Activated CD4-positive, alpha-beta memory T cell treated with anti-CD3 and anti-CD28 coated beads for 36 hours (primary cell): ENCODE measurements at regions of chr18 and their contacts with region 1.

Region 1: GRCh38 chr18:79528846-79529245 is 133.1 kb downstream of the NFATC1 start:
- DNase-seq: peak; percentile 81
- H3K4me3 Mint-ChIP-seq: no peak overlapping the region
- H3K27ac Mint-ChIP-seq: no peak overlapping the region
- H3K4me1 Mint-ChIP-seq: peaks cover 15% of the 10 kb centered on the region
- H3K27me3 Mint-ChIP-seq: no peaks in the 10 kb centered on the region

Region 2: GRCh38 chr18:79378542-79379250 is 150.2 kb before region 1 on chr18:
- CTCF ChIA-PET with region 1: interaction called, 176 read pairs
- POLR2A ChIA-PET with region 1: interaction called, 3 read pairs
- intact Hi-C with region 1: loop called (anchors 1 kb)
- DNase-seq: peak; percentile 90
- H3K4me3 Mint-ChIP-seq: no peak overlapping the region
- H3K27ac Mint-ChIP-seq: no peak overlapping the region
- H3K4me1 Mint-ChIP-seq: peaks cover 15% of the 10 kb centered on the region
- H3K27me3 Mint-ChIP-seq: no peaks in the 10 kb centered on the region

Region 3: DNA sequence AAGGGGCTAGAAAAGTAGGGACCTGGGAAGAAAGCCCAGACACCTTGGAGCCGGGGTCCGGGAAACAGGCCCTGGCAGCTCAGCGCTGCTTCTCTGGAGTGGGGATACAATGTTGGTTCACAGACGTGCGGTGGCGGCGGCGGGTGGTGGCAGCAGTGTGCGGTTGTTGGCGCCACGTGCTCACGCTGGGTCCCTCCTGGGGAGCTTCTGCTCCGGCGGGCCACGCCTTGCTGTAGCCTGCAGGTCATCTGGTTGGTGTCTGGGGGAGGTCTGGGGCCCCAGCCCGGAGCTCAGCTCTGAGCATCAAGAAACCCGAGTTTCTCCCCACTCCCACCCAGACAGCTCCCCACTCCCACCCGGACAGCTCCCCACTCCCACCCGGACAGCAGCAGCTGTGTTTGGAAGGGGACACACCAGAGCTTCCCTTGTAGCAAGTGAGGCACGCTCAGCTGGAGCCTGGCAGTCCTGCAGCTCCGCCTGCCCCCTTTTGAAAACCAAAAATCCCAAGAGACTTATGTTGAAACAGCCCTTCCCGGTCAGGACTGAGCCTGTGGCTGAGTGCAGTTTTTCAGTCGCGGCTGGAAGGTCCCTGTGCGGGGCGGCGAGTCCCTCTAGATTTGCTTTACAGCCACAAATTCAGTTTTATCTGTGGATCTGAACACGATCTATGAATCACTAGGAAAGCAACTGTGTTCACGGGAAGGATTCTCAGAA is 86.2 kb before region 1 on chr18:
- CTCF ChIA-PET with region 1: no interaction called
- POLR2A ChIA-PET with region 1: no interaction called
- intact Hi-C with region 1: no loop called
- DNase-seq: peak; percentile 22
- H3K4me3 Mint-ChIP-seq: no peak overlapping the region
- H3K27ac Mint-ChIP-seq: no peak overlapping the region
- H3K4me1 Mint-ChIP-seq: peaks cover 39% of the 10 kb centered on the region
- H3K27me3 Mint-ChIP-seq: no peaks in the 10 kb centered on the region

Region 4: DNA sequence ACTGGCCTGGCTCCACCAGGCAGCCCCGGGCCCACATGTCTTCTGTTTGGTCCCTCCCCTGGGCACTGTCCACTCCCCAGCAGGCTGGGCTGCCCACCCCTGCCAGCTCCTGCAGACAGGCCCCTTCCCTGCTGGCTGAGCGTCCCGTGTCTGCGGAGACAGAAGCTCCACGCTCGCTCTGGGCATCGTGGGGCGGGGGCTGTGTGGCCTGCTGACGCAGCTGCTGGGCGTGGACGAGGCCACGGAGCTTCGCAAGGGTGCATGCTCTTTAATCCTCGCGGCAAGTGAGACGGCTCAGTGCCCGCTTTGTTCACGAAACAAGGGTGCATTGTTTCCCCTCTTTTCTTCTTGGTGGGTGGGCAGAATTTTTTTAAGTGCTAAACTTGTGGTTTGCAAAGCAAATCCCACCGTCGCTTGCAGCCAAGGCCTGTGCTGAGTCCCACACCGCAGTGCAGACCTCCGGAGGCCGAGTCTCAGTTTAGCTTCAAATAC is 18.0 kb after region 1 on chr18:
- CTCF ChIA-PET with region 1: no interaction called
- POLR2A ChIA-PET with region 1: no interaction called
- intact Hi-C with region 1: no loop called
- DNase-seq: no peak
- H3K4me3 Mint-ChIP-seq: no peak overlapping the region
- H3K27ac Mint-ChIP-seq: no peak overlapping the region
- H3K4me1 Mint-ChIP-seq: no peaks in the 10 kb centered on the region
- H3K27me3 Mint-ChIP-seq: no peaks in the 10 kb centered on the region

Region 5: GRCh38 chr18:79644006-79644665 is 115.3 kb after region 1 on chr18:
- CTCF ChIA-PET with region 1: no interaction called
- POLR2A ChIA-PET with region 1: no interaction called
- intact Hi-C with region 1: loop called (anchors 10 kb)
- DNase-seq: peak; percentile 80
- H3K4me3 Mint-ChIP-seq: no peak overlapping the region
- H3K27ac Mint-ChIP-seq: no peak overlapping the region
- H3K4me1 Mint-ChIP-seq: no peaks in the 10 kb centered on the region
- H3K27me3 Mint-ChIP-seq: peaks cover 9% of the 10 kb centered on the region